ENCODE measurements at regions of chr6 and their contacts with region 1.

Region 1: DNA sequence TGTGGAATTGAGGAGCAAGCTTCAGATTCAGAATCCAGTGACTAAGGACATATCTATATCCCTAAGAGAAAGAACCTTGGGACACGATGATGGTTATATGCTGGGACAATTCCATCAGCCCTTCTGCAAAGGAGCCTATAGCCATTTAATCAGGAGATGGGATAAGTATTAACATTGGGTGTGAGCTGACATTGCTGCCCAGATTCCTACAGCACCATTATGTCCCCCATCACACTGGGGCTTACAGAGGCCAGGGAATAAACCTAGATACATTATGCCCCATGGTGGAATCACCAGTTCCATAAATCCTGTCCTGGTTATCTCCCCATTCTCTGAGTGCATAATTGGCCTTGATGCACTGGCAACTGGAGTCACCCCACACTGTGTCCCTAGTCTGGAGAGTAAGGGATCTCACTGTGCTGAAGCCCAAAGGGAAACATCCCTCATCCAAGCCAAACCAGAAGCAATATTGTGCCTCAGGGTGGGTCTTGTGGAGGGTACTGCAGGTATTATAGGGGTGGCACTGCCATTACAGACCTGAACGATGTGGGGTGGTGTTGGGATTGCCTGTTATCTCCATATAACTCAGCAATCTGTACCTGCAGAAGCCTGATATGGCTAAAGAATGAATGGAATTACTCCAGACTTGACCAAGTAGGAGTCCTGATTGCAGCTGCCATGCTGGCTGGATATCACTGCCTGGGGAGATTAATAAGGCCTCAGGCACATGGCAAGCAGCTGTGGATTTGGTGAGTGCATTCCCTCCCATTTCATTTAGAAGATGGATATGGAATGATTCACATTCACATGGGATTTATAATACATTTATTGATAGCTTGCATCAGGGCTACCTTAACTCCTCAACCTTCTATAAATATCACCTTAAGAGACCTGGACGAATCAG is 5.0 kb downstream of the HLA-A start:
- DNase-seq: peak in 2 of 35 experiments; percentile 9 to 43
- ATAC-seq: peak in 2 of 4 experiments; percentile 3 to 5
- H3K4me3 ChIP-seq: no peak overlapping the region
- H3K4me3 Mint-ChIP-seq: peak overlapping the region; percentile 97 to 99 (median 97)
- H3K27ac ChIP-seq: no peak overlapping the region
- H3K27ac Mint-ChIP-seq: peak overlapping the region; percentile 45 to 86
- H3K4me1 ChIP-seq: peaks cover 22 to 41% of the 10 kb centered on the region in 2 experiments
- H3K4me1 Mint-ChIP-seq: peaks cover 44 to 76% (median 56%) of the 10 kb centered on the region in 3 donors
- H3K27me3 ChIP-seq: no peaks in the 10 kb centered on the region
- H3K27me3 Mint-ChIP-seq: no peaks in the 10 kb centered on the region

Region 2: GRCh38 chr6:28953039-28953584 is 994.2 kb before region 1 on chr6:
- CTCF ChIA-PET with region 1: no interaction called
- POLR2A ChIA-PET with region 1: no interaction called
- DNase-seq: peak in 29 of 35 experiments; percentile 11 to 75 (median 37)
- ATAC-seq: peak; percentile 33 to 71 (median 44)
- H3K4me3 ChIP-seq: peak overlapping the region; percentile 38 to 49
- H3K4me3 Mint-ChIP-seq: peak overlapping the region; percentile 73 to 79 (median 76)
- H3K27ac ChIP-seq: no peak overlapping the region
- H3K27ac Mint-ChIP-seq: peak overlapping the region; percentile 50 to 66
- H3K4me1 ChIP-seq: peaks cover 3 to 15% of the 10 kb centered on the region in 2 experiments
- H3K4me1 Mint-ChIP-seq: peaks cover 16 to 24% (median 24%) of the 10 kb centered on the region in 3 donors
- H3K27me3 ChIP-seq: peaks cover 4 to 14% of the 10 kb centered on the region in 2 experiments
- H3K27me3 Mint-ChIP-seq: peaks cover 0 to 15% of the 10 kb centered on the region in 2 donors

Region 3: DNA sequence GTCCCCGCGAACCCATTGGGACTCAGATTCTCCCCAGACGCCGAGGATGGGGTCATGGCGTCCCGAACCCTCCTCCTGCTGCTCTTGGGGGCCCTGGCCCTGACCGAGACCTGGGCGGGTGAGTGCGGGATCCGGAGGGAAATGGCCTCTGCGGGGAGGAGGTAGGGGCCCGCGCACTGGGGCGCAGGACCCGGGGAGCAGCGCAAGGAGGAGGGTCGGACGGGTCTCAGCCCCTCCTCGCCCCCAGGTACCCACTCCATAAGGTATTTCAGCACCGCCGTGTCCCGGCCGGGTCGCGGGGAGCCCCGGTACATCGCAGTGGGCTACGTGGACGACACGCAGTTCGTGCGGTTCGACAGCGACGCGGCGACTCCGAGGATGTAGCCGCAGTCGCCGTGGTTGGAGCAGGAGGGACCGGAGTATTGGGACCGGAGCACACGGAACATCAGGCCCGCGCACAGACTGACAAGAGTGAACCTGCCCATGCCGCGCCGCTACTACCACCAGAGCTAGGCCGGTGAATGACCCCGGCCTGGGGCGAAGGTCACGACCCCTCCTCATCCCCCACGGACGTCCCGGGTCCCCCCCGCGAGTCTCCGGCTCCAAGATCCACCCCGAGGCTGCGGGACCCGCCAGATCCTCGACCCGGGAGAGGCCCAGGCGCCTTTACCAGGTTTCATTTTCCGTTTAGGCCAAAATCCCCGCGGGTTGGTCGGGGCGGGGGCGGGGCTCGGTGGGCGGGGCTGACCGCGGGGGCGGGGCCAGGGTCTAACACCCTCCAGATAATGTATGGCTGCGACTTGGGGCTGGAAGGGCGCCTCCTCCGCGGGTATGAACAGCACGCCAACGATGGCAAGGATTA is 20.7 kb before region 1 on chr6:
- CTCF ChIA-PET with region 1: no interaction called
- POLR2A ChIA-PET with region 1: interaction called in 1 of 2 experiments, 14 read pairs
- DNase-seq: peak; percentile 50 to 91 (median 78)
- ATAC-seq: peak; percentile 84 to 95 (median 92)
- H3K4me3 ChIP-seq: peak overlapping the region; percentile 82 to 86
- H3K4me3 Mint-ChIP-seq: peak overlapping the region; percentile 83 to 92 (median 87)
- H3K27ac ChIP-seq: peak overlapping the region; percentile 94
- H3K27ac Mint-ChIP-seq: peak overlapping the region; percentile 97 to 98
- H3K4me1 ChIP-seq: peaks cover 5 to 32% of the 10 kb centered on the region in 2 experiments
- H3K4me1 Mint-ChIP-seq: peaks cover 14 to 46% (median 29%) of the 10 kb centered on the region in 3 donors
- H3K27me3 ChIP-seq: no peaks in the 10 kb centered on the region
- H3K27me3 Mint-ChIP-seq: no peaks in the 10 kb centered on the region